HEK293 (cell line): ENCODE measurements at regions of chr17 and their contacts with region 1.

Region 1: GRCh38 chr17:58352014-58352842 is at the start of gene SUPT4H1:
- H3K4me3 ChIP-seq: peak within 1 kb of the TSS; percentile 93
- H3K27ac ChIP-seq: peak within 1 kb of the TSS; percentile 96
- H3K4me1 ChIP-seq: peaks cover 9% of the 10 kb centered on the region
- CTCF ChIP-seq: no peak

Region 2: GRCh38 chr17:58324409-58325288 is 27.6 kb before region 1 on chr17:
- CTCF ChIA-PET with region 1: interaction called, 5 read pairs
- POLR2A ChIA-PET with region 1: interaction called, 30 read pairs
- H3K4me3 ChIP-seq: peak overlapping the region; percentile 44
- H3K27ac ChIP-seq: peak overlapping the region; percentile 12; the same call in 1 of the 2 replicates
- H3K4me1 ChIP-seq: no peaks in the 10 kb centered on the region
- CTCF ChIP-seq: no peak

Region 3: DNA sequence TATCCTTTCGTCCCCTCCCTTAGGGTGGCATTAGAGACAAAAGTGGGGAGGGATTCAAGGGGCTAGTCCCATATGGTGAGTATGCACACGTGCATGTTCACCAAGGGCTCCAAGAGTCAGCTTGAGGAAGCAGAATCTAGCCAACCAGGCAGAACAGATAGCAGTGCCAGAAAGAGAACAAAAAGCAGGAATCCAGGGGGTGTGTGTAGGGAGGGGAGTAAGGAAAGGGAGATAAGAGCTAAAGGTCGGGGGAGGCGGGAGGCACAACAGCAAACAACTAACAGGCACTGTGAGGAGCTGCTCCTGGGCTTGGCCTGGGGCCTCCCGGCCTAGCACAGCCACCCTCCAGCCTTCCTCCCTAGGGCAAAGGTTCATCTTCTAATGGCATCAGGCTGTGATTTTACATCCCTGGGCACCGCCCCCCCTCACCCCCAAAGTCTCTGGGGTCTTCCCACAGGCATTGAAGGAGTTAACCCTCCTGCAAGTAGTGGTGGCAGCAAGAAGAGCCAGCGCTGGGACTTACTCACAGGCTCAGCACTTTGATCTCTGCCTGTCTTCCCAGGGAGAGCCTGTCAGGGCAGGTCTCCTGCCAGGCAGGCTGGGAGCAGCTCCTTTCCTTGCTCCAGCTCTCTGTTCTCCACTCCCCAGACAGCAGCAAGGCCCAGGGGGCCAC is 12.2 kb after region 1 on chr17:
- CTCF ChIA-PET with region 1: interaction called, 4 read pairs
- POLR2A ChIA-PET with region 1: interaction called, 28 read pairs
- H3K4me3 ChIP-seq: no peak overlapping the region
- H3K27ac ChIP-seq: peak overlapping the region; percentile 12; the same call in 1 of the 2 replicates
- H3K4me1 ChIP-seq: no peaks in the 10 kb centered on the region
- CTCF ChIP-seq: no peak

Region 4: DNA sequence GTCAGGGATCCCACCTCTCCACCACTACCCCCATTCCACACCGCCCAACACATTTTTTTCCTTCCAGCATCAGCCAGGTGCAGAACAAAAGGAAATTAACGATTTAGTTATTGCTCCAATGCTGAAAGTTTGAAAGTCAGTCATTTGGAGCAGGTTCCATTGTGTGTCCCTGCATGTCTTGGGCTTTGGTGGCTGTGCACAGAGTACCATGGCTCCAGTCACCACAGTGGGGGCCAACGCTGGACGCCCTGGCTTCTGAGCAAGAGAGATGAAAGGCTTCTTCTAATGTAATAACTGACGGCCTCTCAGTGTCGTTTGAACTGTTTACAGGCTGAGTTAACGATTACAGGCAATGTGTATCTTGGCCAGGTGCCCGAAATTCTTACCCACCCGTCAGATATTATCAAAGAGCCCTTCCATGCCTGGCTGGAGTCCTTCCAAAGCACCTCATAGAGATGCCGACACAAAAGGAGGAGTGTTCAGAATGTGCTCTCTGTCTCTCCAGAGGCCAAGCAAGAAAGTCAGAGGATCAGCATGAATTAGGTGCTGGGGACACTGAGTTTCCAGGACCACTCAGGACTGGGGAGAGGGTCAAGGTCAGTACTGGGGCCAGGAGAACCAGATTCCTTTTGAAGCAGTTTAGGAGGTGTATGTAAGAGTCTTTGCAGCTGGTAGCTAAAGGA is 39.2 kb after region 1 on chr17:
- CTCF ChIA-PET with region 1: interaction called, 4 read pairs
- POLR2A ChIA-PET with region 1: interaction called, 14 read pairs
- H3K4me3 ChIP-seq: peak overlapping the region; percentile 15
- H3K27ac ChIP-seq: peak overlapping the region; percentile 59
- H3K4me1 ChIP-seq: peaks cover 44% of the 10 kb centered on the region
- CTCF ChIP-seq: no peak

Region 5: DNA sequence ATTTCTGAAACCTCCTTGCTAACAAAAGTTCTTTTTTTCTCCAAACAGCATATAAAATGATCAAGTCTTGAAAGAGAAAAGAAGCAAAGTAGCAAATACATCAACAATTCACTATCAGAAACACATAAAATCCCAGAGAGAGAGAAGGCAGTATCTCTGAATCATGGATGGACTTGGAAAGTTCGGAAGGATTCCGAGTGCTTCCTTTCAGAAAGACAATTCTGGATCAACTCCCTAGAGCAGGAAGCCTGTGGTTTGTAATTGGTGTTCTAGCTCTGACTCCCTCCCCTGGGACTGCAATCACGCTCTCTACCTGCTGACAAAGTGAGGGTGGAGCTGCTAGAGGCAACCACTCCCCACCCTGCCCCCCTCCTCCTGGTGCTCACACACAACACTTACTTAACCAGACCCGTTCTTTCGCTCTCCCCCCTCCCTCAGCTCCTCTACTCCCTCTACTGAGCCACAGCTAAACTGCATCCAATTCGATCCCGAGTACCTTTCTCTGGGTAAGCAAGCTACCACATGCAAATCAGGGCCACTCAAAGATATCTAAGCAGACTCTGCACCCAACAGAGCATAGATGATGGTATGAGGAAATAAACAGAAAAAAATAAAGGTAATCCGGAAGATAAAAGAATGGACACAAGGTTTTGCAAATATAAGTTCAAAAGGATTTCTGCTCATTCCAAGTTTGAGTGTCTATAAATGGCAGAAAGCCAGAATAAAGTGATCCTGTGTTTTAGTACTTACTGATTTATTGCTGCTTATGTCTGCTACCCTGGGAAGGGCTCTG is 65.3 kb after region 1 on chr17 and contains the start of gene RNF43:
- CTCF ChIA-PET with region 1: interaction called, 22 read pairs
- POLR2A ChIA-PET with region 1: interaction called, 130 read pairs
- H3K4me3 ChIP-seq: peak within 1 kb of the TSS; percentile 52
- H3K27ac ChIP-seq: peak within 1 kb of the TSS; percentile 89
- H3K4me1 ChIP-seq: peaks cover 10% of the 10 kb centered on the region
- CTCF ChIP-seq: peak; percentile 98